Left cardiac atrium (tissue), 4 donors: ENCODE measurements at regions of chr17 and their contacts with region 1.

Region 1: DNA sequence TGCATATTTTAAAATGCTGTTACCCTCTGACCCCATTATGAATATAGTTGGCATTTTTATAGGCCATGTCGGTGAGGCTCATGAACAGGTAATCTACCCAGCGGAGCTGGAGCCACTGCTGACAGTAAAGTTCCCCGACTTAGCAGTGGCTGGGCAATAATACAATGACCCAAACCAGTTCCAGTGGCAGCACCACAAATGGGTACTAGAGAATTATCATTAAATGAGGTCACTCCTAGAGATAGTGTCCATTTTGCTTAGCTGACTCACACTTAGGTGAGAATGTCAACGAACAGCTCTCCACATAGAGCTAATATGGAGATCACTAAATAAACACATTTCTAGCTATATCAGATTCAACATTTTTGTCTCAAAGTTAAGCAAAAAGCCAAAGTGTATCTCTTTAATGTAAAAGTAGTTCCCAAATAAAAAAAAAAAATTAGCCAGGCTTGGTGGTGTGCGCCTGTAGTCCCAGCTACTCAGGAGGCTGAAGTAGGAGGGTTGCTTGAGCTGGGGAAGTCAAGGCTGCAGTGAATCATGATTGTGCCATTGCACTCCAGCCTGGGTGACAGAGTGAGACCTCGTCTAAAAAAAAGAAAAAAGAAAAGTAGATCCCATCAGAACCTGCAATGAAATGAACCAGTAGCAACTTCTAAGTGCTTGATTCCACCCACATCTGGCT is 7.4 kb downstream of the MYO1D start:
- DNase-seq: no peak
- ATAC-seq: peak; percentile 53 to 82

Region 2: GRCh38 chr17:32831627-32832243 is 37.8 kb before region 1 on chr17:
- intact Hi-C with region 1: loop called in 1 of 2 experiments (anchors 5 kb)
- DNase-seq: no peak
- ATAC-seq: no peak

Region 3: DNA sequence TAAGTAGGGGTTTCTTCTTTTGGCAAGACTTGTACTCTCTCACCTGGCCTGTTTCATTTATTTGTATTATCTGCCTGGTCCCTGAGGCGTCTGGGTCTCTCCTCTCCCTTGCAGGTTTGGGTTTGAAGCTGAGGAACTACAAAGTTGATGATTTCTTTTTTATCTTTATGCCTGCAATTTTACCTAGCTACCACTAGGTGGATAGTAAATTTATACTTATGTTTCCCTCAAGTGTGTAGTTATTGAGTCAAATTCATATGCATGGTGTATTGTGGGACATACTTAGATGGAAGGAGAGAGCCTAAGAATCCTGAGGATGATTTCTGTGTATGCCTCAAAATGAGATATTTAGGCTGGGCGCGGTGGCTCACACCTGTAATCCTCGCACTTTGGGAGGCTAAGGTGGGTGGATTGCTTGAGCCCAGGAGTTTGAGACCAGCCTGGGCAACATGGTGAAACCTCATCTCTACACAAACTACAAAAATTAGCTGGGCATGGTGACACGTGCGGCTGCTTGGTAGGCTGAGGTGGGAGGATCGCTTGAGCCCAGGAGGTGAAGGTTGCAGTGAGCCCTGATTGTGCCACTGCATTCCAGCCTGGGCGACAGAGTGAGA is 72.0 kb after region 1 on chr17:
- intact Hi-C with region 1: no loop called
- DNase-seq: no peak
- ATAC-seq: no peak